ENCODE measurements at regions of chr4 and their contacts with region 1.

Region 1: DNA sequence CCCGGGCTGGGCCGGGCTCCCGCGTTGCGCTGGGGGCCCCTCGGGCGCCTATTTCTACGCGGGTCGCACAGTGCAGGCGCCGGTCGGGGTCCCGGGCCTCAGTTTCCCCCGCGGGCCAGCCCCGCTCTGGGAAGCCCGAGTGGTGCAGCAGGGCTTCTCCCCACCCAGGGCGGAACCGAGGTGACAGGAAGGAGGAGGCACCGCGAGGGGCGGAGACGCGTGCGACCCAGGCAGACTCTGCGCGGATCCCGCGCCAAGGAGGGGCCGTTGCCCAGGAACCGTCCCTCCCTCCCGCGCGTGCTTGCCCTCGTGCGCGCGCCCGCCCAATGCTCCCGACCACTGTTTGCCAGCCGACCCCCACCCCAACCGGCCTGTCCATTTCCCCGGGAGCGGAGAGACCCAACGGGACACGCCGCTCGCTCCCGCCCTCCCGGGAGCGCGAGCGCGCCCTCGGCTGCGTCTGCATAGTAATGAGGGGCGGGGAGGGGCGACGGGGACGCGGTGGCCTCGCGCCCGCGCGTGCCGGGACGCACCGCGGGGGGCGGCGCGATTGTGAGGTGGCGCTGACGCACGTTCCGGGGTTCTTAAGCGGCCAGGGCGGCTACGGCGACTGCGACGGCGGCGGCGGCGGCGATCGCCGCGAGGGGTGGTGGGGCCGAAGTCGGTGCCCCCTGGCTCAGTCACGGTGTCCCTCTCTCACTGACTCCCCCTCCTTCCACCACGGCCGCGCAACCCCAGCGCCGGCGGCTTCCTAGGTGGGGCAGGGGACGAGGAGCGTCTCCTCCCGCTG is at the start of gene CPEB2:
- DNase-seq: peak; percentile 98
- H3K4me3 ChIP-seq: peak within 1 kb of the TSS; percentile 85
- H3K27ac ChIP-seq: peak within 1 kb of the TSS; percentile 99
- H3K4me1 ChIP-seq: peaks cover 20% of the 10 kb centered on the region; the same call in 1 of the 2 replicates
- H3K27me3 ChIP-seq: no peaks in the 10 kb centered on the region
- total RNA-seq, gene CPEB2: 6.6 and 8.1 TPM in 2 replicates

Region 2: GRCh38 chr4:13627606-13628301 is 1374.3 kb before region 1 on chr4 and contains the start of gene BOD1L1:
- in situ Hi-C with region 1: loop called (anchors 25 kb)
- DNase-seq: peak; percentile 91
- H3K4me3 ChIP-seq: peak within 1 kb of the TSS; percentile 99
- H3K27ac ChIP-seq: peak within 1 kb of the TSS; percentile 75
- H3K4me1 ChIP-seq: peaks cover 24% of the 10 kb centered on the region; the same call in 1 of the 2 replicates
- H3K27me3 ChIP-seq: no peaks in the 10 kb centered on the region
- total RNA-seq, gene BOD1L1: 16.5 and 17.3 TPM in 2 replicates

Region 3: GRCh38 chr4:13888112-13888511 is 1114.0 kb before region 1 on chr4:
- in situ Hi-C with region 1: loop called (anchors 25 kb)
- DNase-seq: peak; percentile 91
- H3K4me3 ChIP-seq: no peak overlapping the region
- H3K27ac ChIP-seq: peak overlapping the region; percentile 68
- H3K4me1 ChIP-seq: peaks cover 22% of the 10 kb centered on the region
- H3K27me3 ChIP-seq: no peaks in the 10 kb centered on the region